ENCODE measurements at regions of chr3 and their contacts with region 1.

Region 1: DNA sequence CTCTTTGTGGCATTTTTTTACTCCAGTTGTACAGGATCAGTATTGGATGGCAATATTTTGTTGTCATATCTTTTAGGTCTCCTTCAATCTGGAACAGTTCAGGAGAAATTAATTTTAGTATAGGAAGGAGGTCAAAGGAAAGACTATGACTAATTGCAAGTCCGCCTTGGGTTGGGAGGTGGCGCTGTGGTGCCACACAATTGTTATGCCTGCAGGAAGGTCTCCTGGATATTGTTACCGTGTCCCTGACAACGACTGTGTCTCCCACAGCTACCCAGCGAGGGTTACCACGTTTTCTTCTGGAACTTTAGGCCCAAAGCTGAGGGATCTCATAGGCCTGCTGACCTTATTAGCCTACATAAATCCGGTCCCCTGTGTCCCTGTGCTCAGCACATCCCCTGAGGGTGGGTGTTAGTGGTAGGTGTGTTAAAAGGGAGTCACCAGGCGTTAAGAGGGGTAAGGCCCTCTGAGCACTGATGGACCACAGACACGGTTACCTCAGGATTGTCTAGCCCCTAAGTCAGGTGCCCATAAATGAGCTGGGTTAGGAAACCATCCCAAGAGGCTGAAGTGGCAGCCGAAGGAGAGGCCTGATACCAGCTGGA is 31.5 kb downstream of the KCNAB1 start:
- DNase-seq: peak; percentile 41
- CTCF ChIP-seq: peak; percentile 74

Region 2: GRCh38 chr3:155334914-155335723 is 816.8 kb before region 1 on chr3:
- in situ Hi-C with region 1: no loop called
- DNase-seq: no peak
- CTCF ChIP-seq: no peak

Region 3: DNA sequence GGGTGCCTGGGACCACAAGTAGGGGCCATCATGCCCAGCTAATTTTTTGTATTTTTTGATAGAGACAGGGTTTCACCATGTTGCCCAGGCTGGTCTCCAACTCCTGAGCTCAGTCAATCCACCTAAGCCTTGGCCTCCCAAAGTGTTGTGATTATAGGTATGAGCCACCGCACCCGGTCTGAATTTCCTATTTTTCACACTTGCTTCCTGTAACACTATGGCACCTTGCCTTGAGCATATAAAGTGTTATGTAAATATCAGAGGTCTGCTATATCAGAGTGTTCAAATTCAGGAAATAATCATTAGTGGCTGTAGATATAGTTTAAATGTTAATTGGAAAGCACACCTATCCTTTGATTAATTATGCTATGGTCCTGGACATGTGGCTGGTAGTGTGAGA is 133.7 kb after region 1 on chr3:
- in situ Hi-C with region 1: no loop called
- DNase-seq: no peak
- CTCF ChIP-seq: no peak

Region 4: GRCh38 chr3:156433138-156433537 is 281.2 kb after region 1 on chr3:
- in situ Hi-C with region 1: no loop called
- DNase-seq: no peak
- CTCF ChIP-seq: no peak

Region 5: GRCh38 chr3:156509189-156510174 is 357.6 kb after region 1 on chr3:
- in situ Hi-C with region 1: loop called (anchors 25 kb)
- DNase-seq: peak; percentile 71
- CTCF ChIP-seq: peak; percentile 45

Region 6: GRCh38 chr3:156674046-156674910 is 522.4 kb after region 1 on chr3 and contains the start of gene TIPARP:
- in situ Hi-C with region 1: loop called (anchors 25 kb)
- DNase-seq: peak; percentile 97
- CTCF ChIP-seq: peak; percentile 89

Region 7: DNA sequence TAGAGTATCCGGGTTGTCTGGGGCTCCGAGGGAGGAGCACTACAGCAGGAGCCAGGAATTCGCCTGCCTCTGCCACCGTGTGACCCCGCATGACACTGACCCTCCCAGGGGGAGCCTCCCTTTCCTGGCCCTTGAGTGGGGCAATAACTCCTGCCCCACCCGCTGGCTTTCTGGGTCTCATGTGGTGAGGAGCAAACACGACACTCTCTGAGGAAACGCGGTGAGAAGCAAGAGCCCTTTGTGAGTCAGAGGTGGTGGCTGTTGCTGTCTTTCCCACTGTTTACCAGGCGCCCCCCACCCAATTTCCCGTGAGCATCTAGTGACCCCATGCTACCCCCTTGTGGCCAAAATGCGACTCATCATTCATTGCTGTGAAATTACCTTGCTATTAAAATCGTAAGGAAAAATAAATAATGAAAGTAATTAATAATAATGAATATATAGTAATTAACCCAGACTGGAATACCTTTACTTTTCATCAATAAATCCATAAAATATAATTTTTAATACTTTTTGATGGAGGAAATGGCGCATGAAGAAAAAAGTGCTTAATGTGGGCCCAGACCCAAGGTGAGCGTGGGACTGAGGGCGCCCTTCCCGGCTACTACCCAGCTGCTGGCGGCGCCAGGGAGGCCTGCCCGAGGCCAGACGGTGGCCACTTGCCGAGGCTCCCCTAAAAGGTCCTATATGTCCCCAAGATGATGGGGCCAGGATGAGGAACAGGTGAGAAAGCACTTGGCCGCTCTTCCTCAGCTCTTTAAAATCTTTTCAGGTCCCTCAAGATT is 978.7 kb after region 1 on chr3:
- in situ Hi-C with region 1: loop called (anchors 25 kb)
- DNase-seq: peak; percentile 48
- CTCF ChIP-seq: peak; percentile 61

Measured in GM13976 (cell line).